WTC11 (cell line): ENCODE measurements at regions of chrX and their contacts with region 1.

Region 1: GRCh38 chrX:42384956-42385355 is 393.0 kb downstream of the PPP1R2C start:
- DNase-seq: no peak
- ATAC-seq: no peak
- H3K4me3 Mint-ChIP-seq: no peak overlapping the region
- H3K27ac Mint-ChIP-seq: no peak overlapping the region
- H3K4me1 Mint-ChIP-seq: no peaks in the 10 kb centered on the region
- H3K27me3 Mint-ChIP-seq: no peaks in the 10 kb centered on the region
- CTCF ChIP-seq: no peak

Region 2: GRCh38 chrX:42720209-42720608 is 335.3 kb after region 1 on chrX:
- CTCF ChIA-PET with region 1: no interaction called
- POLR2A ChIA-PET with region 1: interaction called, 10 read pairs
- DNase-seq: no peak
- ATAC-seq: no peak
- H3K4me3 Mint-ChIP-seq: no peak overlapping the region
- H3K27ac Mint-ChIP-seq: no peak overlapping the region
- H3K4me1 Mint-ChIP-seq: peaks cover 11% of the 10 kb centered on the region
- H3K27me3 Mint-ChIP-seq: no peaks in the 10 kb centered on the region
- CTCF ChIP-seq: no peak